WTC11 (cell line): ENCODE measurements at regions of chr19 and their contacts with region 1.

Region 1: GRCh38 chr19:2950286-2951124 is 5.7 kb upstream of the ZNF77 start:
- DNase-seq: peak; percentile 100
- ATAC-seq: peak; percentile 97
- H3K4me3 Mint-ChIP-seq: peak overlapping the region; percentile 97
- H3K27ac Mint-ChIP-seq: peak overlapping the region; percentile 93
- H3K4me1 Mint-ChIP-seq: peaks cover 8% of the 10 kb centered on the region
- H3K27me3 Mint-ChIP-seq: no peaks in the 10 kb centered on the region
- CTCF ChIP-seq: no peak

Region 2: GRCh38 chr19:2648528-2648937 is 302.0 kb before region 1 on chr19:
- CTCF ChIA-PET with region 1: interaction called, 17 read pairs
- POLR2A ChIA-PET with region 1: no interaction called
- DNase-seq: peak; percentile 88
- ATAC-seq: peak; percentile 78
- H3K4me3 Mint-ChIP-seq: no peak overlapping the region
- H3K27ac Mint-ChIP-seq: no peak overlapping the region
- H3K4me1 Mint-ChIP-seq: no peaks in the 10 kb centered on the region
- H3K27me3 Mint-ChIP-seq: no peaks in the 10 kb centered on the region
- CTCF ChIP-seq: peak; percentile 94

Region 3: GRCh38 chr19:2923510-2923909 is 27.0 kb before region 1 on chr19:
- CTCF ChIA-PET with region 1: interaction called, 17 read pairs
- POLR2A ChIA-PET with region 1: no interaction called
- DNase-seq: no peak
- ATAC-seq: no peak
- H3K4me3 Mint-ChIP-seq: no peak overlapping the region
- H3K27ac Mint-ChIP-seq: no peak overlapping the region
- H3K4me1 Mint-ChIP-seq: peaks cover 14% of the 10 kb centered on the region
- H3K27me3 Mint-ChIP-seq: no peaks in the 10 kb centered on the region
- CTCF ChIP-seq: no peak

Region 4: GRCh38 chr19:3035542-3036118 is 85.1 kb after region 1 on chr19:
- CTCF ChIA-PET with region 1: interaction called, 45 read pairs
- POLR2A ChIA-PET with region 1: interaction called, 6 read pairs
- DNase-seq: peak; percentile 98
- ATAC-seq: peak; percentile 87
- H3K4me3 Mint-ChIP-seq: peak overlapping the region; percentile 86
- H3K27ac Mint-ChIP-seq: peak overlapping the region; percentile 93
- H3K4me1 Mint-ChIP-seq: peaks cover 27% of the 10 kb centered on the region
- H3K27me3 Mint-ChIP-seq: peaks cover 66% of the 10 kb centered on the region
- CTCF ChIP-seq: no peak

Region 5: DNA sequence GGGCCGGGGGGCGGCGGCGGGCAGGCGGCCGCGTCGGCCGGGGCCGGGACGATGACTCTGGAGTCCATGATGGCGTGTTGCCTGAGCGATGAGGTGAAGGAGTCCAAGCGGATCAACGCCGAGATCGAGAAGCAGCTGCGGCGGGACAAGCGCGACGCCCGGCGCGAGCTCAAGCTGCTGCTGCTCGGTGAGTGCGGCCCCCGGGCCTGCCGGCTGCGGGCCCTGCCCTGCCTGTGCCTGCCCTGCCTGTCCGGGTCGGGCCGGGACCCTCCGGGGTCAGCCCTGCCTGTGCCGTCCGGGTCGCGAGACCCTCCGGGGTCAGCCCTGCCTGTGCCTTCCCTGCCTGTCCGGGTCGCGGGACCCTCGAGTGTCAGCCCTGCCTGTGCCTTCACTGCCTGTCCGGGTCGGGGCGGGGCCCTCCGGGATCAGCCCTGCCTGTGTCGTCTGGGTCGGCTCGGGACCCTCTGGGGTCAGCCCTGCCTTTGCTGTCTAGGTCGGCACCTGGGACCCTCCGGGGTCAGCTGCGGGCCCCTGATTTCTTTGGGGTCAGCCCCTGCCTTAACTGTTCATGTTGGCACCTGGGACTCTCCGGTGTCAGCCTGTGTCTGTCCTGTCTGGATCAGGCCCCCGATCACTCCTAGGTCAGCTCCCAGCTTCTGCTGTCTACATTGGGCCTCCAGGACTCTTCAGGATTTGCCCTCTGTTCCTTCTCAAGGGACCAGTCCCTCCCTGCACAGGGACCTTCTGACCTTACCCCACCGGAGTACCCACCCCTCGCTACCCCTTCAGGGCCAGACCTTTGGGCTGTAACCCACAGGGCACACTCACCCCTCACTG is 144.3 kb after region 1 on chr19:
- CTCF ChIA-PET with region 1: interaction called, 28 read pairs
- POLR2A ChIA-PET with region 1: no interaction called
- DNase-seq: no peak
- ATAC-seq: no peak
- H3K4me3 Mint-ChIP-seq: peak overlapping the region; percentile 78
- H3K27ac Mint-ChIP-seq: no peak overlapping the region
- H3K4me1 Mint-ChIP-seq: peaks cover 14% of the 10 kb centered on the region
- H3K27me3 Mint-ChIP-seq: no peaks in the 10 kb centered on the region
- CTCF ChIP-seq: no peak

Region 6: DNA sequence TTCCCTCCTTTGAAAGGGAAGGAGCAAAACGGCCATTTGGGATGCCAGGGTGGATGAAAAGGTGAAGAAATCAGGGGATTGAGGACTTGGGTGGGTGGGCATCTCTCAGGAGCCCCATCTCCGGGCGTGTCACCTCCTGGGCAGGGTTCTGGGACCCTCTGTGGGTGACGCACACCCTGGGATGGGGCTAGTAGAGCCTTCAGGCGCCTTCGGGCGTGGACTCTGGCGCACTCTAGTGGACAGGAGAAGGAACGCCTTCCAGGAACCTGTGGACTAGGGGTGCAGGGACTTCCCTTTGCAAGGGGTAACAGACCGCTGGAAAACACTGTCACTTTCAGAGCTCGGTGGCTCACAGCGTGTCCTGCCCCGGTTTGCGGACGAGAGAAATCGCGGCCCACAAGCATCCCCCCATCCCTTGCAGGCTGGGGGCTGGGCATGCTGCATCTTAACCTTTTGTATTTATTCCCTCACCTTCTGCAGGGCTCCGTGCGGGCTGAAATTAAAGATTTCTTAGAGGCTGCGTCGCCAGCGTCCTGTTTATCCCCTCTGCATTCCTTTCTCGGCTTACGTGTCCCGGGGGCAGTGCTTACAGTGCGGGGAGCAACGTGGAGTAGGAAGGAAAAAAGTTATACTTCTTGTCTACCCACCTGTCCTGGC is 212.9 kb after region 1 on chr19:
- CTCF ChIA-PET with region 1: interaction called, 30 read pairs
- POLR2A ChIA-PET with region 1: no interaction called
- DNase-seq: peak; percentile 83
- ATAC-seq: peak; percentile 98
- H3K4me3 Mint-ChIP-seq: peak overlapping the region; percentile 67
- H3K27ac Mint-ChIP-seq: no peak overlapping the region
- H3K4me1 Mint-ChIP-seq: peaks cover 7% of the 10 kb centered on the region
- H3K27me3 Mint-ChIP-seq: peaks cover 14% of the 10 kb centered on the region
- CTCF ChIP-seq: peak; percentile 83